PC-9 (cell line): ENCODE measurements at regions of chr17 and their contacts with region 1.

Region 1: DNA sequence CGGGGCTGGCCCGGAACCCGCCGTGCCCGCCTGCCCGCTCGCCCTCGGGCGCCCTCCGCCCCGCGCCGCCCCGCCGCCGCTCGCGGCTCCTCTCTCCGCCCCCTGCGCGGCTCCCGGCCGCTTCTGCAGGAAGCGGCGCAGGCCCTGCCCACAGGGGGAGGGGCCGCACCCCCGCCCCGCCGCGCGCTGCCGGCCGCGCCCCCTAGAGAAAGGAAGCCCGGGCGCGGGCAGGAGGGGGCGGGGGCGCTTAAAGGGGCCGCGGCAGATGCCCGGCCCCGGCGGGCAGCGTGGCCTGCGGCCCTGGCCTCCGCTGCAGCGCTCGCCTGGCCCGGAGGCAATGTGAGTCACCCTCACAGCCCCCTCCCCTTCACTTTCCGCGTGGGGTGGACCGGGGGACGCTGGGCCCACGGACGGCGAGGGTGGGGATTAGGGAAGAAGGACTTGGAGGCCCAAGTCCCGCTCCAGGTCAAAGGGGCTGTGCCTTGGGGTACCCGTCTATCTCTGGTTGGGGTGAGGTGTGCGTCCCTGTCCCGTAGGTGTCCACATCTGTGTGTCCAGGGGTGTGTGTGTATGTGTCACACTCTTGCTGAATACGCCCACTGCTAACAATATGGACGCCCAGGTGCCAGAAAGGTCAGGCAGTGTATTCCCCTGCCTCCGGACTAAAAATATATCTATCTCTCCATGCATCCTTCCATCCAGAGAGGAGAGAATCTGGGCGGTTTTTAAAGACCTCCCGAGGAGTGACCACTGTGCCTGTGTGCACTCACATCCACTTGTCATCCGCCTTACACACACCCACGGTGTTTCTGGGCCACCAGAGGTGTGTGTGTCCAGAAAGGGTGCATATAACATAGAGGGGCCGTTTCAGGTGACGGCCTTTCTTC is at the start of gene GIT1:
- DNase-seq: peak; percentile 58 to 86
- H3K4me3 ChIP-seq: peak within 1 kb of the TSS; percentile 93
- H3K27ac ChIP-seq: 0 out of 2 replicates have a peak within 1 kb of the TSS, but pooled peaks have one; percentile 4
- H3K4me1 ChIP-seq: peaks cover 39% of the 10 kb centered on the region
- H3K27me3 ChIP-seq: no peaks in the 10 kb centered on the region
- CTCF ChIP-seq: no peak; the same call in 1 of the 2 replicates
- total RNA-seq, gene GIT1: 84.8 and 100 TPM in 2 replicates

Region 2: GRCh38 chr17:29369831-29370735 is 219.7 kb before region 1 on chr17:
- CTCF ChIA-PET with region 1: interaction called, 5 read pairs
- POLR2A ChIA-PET with region 1: no interaction called
- intact Hi-C with region 1: loop called (anchors 1 kb)
- DNase-seq: peak; percentile 61 to 71
- H3K4me3 ChIP-seq: peak overlapping the region; percentile 10; the same call in 1 of the 2 replicates
- H3K27ac ChIP-seq: no peak overlapping the region
- H3K4me1 ChIP-seq: peaks cover 11% of the 10 kb centered on the region
- H3K27me3 ChIP-seq: no peaks in the 10 kb centered on the region
- CTCF ChIP-seq: peak; percentile 89

Region 3: DNA sequence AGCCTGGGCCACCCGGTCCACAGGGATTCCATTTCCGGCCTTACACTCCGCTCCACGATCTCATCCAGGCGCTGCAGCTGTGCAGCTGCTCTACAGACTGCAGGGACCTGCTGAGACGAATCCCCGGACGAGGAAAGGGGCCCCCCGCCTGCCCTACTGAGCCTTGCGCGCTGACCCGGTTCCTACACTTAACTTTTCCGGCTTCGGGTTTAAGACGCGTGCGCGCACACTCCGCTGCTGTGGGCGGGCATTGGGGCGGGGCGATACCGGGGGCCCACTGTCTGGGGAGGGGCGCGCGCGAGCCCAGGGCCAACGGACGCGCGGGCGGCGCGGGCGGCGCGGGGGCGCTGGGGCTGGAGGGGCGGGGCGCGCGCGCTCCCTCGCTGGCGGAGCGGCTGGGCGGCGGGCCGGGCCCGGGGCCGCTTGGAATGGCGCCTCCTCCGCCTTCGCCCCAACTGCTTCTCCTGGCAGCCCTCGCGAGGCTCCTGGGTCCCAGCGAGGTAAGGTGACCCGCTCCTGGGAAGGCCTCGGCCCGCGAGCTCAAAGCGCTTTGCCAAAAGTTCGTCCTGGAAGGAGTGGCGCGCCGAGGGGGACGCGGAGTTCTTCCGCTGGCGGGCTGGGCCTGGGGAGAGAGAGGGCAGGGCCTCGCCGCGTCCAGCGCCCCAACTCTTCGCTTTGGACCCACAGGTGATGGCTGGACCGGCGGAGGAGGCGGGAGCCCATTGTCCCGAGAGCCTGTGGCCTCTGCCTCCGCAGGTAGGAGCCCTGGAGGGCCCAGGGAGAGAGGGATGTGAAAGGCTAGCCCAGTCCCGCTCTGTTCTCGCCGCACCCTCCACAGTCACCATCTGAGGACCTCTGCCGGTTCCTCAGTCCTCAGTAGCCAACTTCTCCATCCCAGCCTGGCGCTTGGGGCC is 21.2 kb before region 1 on chr17 and contains the start of gene TP53I13:
- CTCF ChIA-PET with region 1: interaction called, 3 read pairs
- POLR2A ChIA-PET with region 1: interaction called, 3 read pairs
- intact Hi-C with region 1: loop called (anchors 1 kb)
- DNase-seq: peak; percentile 64 to 89
- H3K4me3 ChIP-seq: peak within 1 kb of the TSS; percentile 76
- H3K27ac ChIP-seq: peak within 1 kb of the TSS; percentile 53
- H3K4me1 ChIP-seq: peaks cover 28% of the 10 kb centered on the region
- H3K27me3 ChIP-seq: no peaks in the 10 kb centered on the region
- CTCF ChIP-seq: no peak
- total RNA-seq, gene TP53I13: 46.9 and 68.8 TPM in 2 replicates

Region 4: DNA sequence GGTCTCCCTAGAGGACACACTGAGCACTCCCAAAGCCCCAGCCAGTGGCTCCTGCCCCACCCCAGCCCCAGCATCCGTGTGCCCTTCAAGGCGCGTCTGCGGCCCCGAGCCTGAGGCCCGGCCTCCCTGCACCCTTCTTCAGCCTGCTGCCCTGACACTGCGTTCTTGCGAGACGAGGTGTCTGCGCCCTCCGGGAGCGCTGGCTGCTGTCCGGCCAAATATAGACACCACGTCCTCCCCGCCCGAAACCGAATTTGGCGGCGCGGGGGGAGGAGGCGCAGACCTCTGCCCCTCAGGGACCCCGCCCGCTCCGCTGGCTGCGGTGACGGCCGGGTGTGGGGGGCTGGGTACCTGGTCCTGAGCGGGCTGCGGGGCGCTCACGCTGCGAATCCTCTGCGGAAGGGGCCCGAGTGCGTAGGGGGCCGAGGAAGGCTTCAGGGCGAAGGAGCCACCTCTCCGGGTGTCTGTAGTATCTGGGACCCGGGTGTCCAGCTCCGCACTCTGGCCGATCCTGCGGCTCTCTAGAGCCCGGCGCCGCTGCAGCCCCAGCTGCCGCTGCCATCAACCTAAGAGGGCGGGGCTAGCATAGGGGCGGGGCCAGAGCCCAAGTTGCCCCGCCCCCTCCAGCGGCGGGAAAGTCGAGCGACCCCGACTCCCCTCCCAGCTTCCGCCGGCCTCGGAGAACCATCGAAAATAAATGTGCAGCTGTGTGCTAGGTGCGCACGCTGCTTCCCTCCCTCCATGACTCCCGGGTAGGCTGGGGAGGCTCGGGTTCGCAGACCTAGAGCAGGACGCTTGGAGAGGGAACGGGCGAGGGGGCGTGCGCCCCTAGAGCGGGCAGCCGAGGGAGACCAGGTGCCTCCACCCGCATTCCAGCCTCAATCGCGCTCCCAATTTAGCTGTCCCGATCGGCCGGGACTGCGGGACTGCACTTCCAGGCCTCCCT is 32.8 kb after region 1 on chr17 and contains the start of gene CORO6:
- CTCF ChIA-PET with region 1: interaction called, 9 read pairs
- POLR2A ChIA-PET with region 1: interaction called, 4 read pairs
- intact Hi-C with region 1: loop called (anchors 2 kb)
- DNase-seq: peak in 1 of 2 experiments; percentile 71
- H3K4me3 ChIP-seq: peak within 1 kb of the TSS; percentile 96
- H3K27ac ChIP-seq: peak within 1 kb of the TSS; percentile 36
- H3K4me1 ChIP-seq: peaks cover 58% of the 10 kb centered on the region
- H3K27me3 ChIP-seq: no peaks in the 10 kb centered on the region
- CTCF ChIP-seq: no peak
- total RNA-seq, gene CORO6: 35.0 and 52.1 TPM in 2 replicates

Region 5: GRCh38 chr17:29789196-29790170 is 199.7 kb after region 1 on chr17:
- CTCF ChIA-PET with region 1: no interaction called
- POLR2A ChIA-PET with region 1: no interaction called
- intact Hi-C with region 1: loop called (anchors 5 kb)
- DNase-seq: peak in 1 of 2 experiments; percentile 39
- H3K4me3 ChIP-seq: no peak overlapping the region
- H3K27ac ChIP-seq: no peak overlapping the region
- H3K4me1 ChIP-seq: peaks cover 19% of the 10 kb centered on the region
- H3K27me3 ChIP-seq: no peaks in the 10 kb centered on the region
- CTCF ChIP-seq: no peak